HEK293T (cell line): ENCODE measurements at regions of chr2 and their contacts with region 1.

Region 1: DNA sequence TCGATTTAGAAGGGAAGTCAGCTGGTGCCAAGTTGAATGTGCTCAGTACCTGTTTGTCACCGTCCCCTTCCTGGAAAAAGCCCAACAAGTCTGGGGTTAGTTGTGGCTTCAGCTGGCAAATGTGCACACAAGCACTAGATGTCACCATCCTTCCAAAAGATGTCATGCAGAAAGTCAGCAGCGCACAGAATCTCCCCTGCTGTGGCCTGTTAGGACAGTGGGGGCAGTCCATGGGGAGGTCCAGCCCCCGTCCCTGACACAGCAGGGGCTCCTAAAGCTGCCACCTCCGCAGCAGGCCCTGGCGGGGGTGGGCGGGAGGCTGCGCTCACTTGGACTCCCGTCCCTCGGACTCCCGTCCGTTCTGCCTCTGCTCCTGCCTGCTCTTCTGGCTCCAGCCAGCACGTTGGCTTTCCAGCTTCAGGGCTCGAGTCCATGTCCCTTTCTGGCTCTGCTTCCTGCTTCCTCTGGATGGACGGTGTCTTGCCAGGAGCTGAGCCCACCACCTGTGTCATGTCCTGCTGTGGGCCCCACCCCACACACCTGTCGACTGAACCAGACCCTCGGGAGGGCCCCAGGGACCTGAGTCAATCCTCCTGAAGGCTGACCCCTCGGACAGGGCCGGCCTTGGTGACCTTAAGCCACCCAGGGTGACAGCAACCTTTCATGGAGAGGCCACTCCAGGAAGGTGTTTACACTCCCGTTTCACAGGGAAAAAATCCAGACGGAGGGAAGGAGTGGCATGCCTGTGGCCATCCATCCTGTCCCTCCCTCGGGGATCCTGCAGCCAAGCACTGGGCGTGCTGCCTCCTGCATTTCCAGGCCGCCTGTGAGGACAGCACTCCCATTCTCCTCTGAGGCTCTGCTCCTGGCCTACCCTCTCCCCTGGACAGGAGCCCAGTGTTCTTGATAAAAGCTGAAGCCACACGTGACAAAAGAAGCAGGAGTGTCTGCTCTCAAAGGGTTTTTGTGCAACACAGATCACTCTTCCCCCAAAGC is 8.5 kb downstream of the RAB17 start:
- DNase-seq: peak; percentile 46

Region 2: DNA sequence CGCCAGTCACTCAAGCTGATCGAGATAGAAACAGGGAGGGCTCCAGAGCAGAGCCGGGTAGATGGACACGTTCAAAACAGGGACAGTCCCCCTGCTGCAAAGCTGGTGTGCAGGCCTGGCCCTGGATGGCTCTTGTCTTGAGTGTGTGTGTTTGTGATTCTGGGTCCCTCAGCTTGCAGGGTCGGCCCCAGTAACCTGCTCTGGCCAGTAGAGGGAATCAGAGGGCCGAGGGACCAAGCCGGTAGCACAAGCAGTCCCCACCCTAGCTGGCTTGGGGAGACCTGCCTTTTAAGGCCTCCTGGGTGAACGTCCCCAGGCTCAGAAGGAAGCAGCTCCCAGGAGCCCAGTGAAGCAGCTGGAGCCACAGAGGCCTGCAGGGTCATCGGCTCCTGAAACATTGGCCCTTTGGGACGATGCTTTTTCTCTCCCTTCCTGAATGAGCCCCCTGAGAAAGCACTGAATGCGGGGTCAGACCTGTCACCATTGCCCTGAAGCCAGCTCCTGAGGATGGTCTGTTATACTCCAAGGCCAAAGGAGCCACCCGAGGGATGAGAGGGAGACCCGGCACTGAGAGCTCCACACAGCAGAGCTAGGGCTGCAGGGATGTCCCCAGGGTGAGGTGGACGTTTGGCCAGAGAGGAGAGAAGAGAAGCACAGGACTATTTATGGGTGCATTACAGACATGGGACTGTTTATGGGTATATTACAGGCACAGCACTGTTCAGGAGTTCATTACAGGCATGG is 110.4 kb before region 1 on chr2:
- CTCF ChIA-PET with region 1: interaction called, 11 read pairs
- POLR2A ChIA-PET with region 1: no interaction called
- DNase-seq: peak; percentile 14

Region 3: GRCh38 chr2:237563816-237564215 is 18.2 kb before region 1 on chr2:
- CTCF ChIA-PET with region 1: no interaction called
- POLR2A ChIA-PET with region 1: no interaction called
- DNase-seq: no peak

Region 4: DNA sequence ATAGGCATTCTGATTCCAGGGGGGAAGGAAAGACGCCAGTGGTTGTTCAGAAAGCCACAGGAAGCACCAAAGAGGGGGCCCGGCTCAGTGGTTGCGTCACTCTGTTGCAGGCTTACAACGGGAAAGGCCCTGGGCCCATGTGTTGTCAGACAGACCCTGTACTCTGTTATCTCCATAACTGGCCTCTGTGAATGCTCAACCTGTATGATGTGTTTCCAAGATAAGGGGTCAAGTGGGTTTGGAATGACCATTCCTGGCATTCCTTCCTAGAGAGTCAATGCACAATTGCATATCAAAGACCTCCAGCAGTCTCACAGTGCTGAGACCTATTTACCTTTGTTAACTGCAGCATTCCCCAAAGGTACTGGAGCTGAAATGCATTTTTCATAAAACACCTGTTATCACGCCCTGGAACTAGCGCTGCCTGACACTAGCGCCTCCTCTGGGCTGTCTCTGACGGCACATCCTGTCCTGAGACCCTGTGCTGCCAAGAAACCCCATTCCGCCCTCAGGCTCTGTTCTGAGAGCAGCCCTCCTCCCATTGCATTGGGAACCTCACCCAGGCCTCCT is 32.2 kb after region 1 on chr2:
- CTCF ChIA-PET with region 1: no interaction called
- POLR2A ChIA-PET with region 1: no interaction called
- DNase-seq: no peak